OCI-LY7 (cell line): ENCODE measurements at regions of chr15 and their contacts with region 1.

Region 1: GRCh38 chr15:52318729-52319500 is 23.3 kb upstream of the MYO5C start:
- DNase-seq: no peak
- H3K4me3 ChIP-seq: no peak overlapping the region
- H3K27ac ChIP-seq: no peak overlapping the region
- H3K4me1 ChIP-seq: no peaks in the 10 kb centered on the region
- CTCF ChIP-seq: no peak

Region 2: GRCh38 chr15:52392008-52392687 is 73.2 kb after region 1 on chr15:
- CTCF ChIA-PET with region 1: interaction called, 3 read pairs
- POLR2A ChIA-PET with region 1: interaction called, 10 read pairs
- intact Hi-C with region 1: no loop called
- DNase-seq: no peak
- H3K4me3 ChIP-seq: no peak overlapping the region
- H3K27ac ChIP-seq: no peak overlapping the region
- H3K4me1 ChIP-seq: no peaks in the 10 kb centered on the region
- CTCF ChIP-seq: no peak

Region 3: DNA sequence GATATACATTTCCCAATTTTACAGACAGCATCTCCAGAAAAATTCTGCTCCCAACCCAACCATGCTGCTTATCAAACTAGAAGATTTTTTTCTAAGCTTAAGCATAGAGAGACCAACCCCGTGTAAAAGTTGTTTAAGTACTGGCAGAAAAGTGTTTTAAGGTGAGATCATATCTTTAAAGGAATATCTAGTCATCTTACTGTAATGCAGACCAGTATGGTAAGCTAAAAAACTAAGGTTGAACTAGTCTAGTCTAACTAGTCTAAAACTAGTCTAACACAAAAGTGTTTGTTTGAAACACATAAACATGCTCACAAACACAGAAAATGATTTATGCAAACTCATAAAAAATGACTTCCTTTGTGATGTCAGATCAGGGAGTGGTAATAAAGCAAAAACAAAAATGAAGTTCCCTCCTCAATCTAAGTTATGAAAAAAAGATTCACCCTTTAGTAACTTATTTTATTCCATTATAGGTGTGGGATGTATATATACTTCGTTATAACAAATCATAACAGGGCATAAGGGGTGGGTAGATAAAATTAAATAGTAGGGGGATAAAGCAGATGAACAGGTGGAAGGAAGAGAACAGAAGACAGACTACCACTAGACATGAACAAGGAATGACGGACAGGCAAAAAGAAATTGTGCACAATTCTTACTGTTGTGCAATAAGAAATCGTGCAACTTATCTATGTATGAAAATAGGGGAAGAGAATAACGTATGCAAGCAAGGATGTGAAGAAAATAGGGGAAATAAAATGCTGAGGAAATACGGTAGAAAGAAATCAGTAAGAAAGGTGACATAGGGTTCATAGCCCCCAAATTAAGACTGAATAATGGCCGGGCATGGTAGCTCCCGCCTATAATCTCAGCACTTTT is 199.8 kb after region 1 on chr15:
- CTCF ChIA-PET with region 1: no interaction called
- POLR2A ChIA-PET with region 1: no interaction called
- intact Hi-C with region 1: no loop called
- DNase-seq: no peak
- H3K4me3 ChIP-seq: no peak overlapping the region
- H3K27ac ChIP-seq: no peak overlapping the region
- H3K4me1 ChIP-seq: peaks cover 21% of the 10 kb centered on the region
- CTCF ChIP-seq: no peak